Mammary epithelial cell (primary cell): ENCODE measurements at regions of chr12 and their contacts with region 1.

Region 1: DNA sequence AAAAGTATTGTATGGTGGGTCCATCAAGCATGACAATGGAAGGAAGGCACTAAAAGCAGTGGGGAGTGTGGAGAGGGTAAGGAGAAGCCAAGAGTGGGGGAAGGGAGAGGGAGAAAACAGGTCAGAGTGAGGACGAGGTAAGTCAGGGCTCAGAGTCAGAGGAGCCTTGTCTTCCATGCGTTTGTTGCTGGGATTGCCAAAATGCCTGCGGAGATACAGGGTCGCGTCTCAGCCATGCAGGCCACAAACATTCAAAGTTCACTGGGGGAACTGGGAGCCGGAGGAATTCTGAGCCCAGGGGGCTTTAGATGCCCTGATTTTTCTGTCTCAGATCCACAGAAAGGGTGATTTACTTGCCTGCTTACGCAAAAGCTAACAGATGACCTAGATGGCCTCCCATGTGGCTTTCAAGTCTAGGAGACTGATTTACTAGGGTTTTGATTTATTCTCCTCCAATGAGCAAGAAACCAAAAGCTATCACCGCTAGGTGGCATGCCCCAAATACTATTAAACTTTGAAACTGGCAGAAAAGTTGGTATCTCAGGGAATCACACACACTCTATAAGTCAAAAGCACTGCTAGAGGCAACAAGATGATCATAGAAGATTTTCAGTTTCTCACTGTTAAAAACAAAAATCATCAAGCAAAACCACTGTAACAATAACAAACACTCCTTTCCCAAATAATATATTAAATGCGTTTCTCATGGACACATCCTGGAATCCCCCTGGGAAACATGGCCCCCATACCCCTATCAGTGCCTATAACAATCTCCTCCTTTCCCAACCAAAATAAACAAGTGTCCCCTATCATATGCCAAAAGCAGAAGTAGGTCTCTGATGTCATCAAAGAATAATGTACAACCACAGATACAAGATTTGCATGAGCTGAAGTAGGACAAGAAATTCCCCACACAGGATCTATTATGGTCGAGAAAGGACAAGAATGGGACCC is 26.6 kb upstream of the MDM1 start:
- DNase-seq: peak; percentile 62
- H3K4me3 ChIP-seq: no peak overlapping the region
- H3K27ac ChIP-seq: no peak overlapping the region
- H3K4me1 ChIP-seq: peaks cover 5% of the 10 kb centered on the region
- H3K27me3 ChIP-seq: no peaks in the 10 kb centered on the region
- CTCF ChIP-seq: peak; percentile 69 to 81

Region 2: DNA sequence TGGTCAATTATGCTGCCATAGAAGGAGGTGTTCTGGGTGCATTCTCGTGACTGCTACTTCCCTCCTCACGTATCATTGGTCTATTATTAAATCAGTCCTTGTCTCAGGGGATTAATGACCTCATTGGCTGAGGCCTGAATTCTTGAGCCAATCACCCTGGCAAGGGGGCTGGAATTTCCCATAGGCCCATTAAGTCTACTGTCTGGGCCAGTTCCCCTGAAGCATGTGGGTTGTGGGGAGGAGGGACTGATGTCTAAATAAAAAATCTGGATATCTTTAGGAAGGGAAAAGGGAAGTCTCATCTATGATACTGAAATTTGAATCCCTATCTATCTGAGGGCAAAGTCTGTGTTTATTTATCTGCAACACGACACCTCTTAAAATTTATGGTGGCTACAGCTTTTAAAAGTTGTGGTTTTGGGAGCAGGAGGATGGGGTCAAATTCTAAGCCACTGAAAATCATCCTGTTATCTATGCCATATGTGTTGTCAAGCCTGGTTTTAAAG is 638.4 kb before region 1 on chr12:
- CTCF ChIA-PET with region 1: no interaction called
- dilution Hi-C with region 1: no loop called
- in situ Hi-C with region 1: no loop called
- intact Hi-C with region 1: no loop called
- DNase-seq: no peak
- H3K4me3 ChIP-seq: no peak overlapping the region
- H3K27ac ChIP-seq: no peak overlapping the region
- H3K4me1 ChIP-seq: no peaks in the 10 kb centered on the region
- H3K27me3 ChIP-seq: no peaks in the 10 kb centered on the region
- CTCF ChIP-seq: no peak

Region 3: DNA sequence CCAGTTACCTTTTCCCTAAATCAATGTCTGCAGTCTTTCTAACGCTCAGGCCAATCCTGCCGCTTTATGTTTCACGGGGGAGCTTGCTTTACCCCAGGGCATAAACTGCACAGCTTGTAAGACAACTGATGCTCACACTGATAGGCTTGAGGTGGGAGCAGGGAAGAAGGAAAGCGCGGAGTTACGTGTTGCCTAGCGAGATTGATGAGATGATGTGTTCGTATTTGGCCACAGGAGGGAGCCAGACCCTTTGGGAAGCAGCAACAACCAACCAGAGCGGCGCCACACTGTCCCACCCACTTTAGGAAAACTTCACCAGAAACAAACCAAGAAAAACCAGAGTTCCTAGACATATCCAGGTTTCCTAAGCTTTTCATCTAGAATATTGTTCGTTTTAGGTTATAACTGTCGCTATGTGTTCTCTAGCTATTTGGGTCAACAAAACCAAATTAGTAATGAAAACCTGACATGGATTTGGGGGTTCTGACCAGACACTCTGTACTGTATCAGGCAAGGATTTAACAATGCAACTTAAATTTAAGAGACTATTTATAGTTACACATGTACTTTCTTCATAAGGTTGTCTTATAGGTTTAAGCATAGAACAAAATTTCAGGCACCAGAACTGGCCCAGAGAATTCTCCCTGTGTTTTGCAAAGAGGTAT is 135.6 kb before region 1 on chr12:
- CTCF ChIA-PET with region 1: no interaction called
- dilution Hi-C with region 1: no loop called
- in situ Hi-C with region 1: no loop called
- intact Hi-C with region 1: loop called (anchors 1 kb)
- DNase-seq: peak; percentile 71
- H3K4me3 ChIP-seq: no peak overlapping the region
- H3K27ac ChIP-seq: no peak overlapping the region
- H3K4me1 ChIP-seq: peaks cover 6% of the 10 kb centered on the region
- H3K27me3 ChIP-seq: peaks cover under 1% of the 10 kb centered on the region
- CTCF ChIP-seq: peak; percentile 82 to 90

Region 4: GRCh38 chr12:68557011-68557730 is 198.4 kb after region 1 on chr12:
- CTCF ChIA-PET with region 1: no interaction called
- dilution Hi-C with region 1: no loop called
- in situ Hi-C with region 1: no loop called
- intact Hi-C with region 1: no loop called
- DNase-seq: peak; percentile 52
- H3K4me3 ChIP-seq: no peak overlapping the region
- H3K27ac ChIP-seq: no peak overlapping the region
- H3K4me1 ChIP-seq: peaks cover 25% of the 10 kb centered on the region
- H3K27me3 ChIP-seq: no peaks in the 10 kb centered on the region
- CTCF ChIP-seq: no peak

Region 5: DNA sequence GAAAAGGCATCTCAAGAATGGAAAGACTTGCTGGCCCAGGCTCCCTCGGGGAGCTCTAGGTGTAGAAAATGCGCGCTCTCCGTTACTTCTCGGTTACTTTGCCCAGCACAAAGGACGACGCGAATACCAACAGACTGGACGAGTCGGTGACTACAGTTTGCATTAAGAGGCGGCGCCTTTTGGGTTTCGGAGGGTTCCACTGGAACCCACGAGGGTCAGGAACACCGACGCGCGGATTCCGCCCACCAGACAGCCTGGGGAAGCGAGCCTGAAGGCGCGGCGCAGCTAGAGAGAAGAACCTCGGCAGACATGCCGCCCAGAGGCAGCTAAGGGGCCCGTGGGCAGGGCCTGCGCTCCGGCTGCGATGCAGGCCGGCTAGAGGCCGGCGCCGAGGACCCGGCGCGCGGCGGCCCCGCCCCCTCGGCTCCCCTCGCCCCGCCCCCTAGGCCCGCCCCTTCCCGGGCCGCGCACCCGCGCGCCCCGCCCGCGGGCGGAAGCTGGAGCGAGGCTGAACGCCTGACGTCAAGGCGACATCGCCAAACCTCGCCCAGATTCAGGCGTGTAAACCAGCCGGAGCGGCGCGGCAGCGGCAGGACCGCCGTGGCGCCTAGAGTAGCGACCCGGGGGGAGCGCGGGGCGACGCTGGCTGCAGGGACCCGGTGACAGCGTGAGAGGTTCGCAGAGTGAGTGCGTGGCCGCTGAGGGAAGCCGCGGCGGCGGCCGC is 251.7 kb after region 1 on chr12 and contains the start of gene RAP1B:
- CTCF ChIA-PET with region 1: no interaction called
- dilution Hi-C with region 1: no loop called
- in situ Hi-C with region 1: loop called in 1 of 2 experiments (anchors 25 kb)
- intact Hi-C with region 1: loop called (anchors 1 kb)
- DNase-seq: peak; percentile 85
- H3K4me3 ChIP-seq: peak within 1 kb of the TSS; percentile 67 to 100 (median 99)
- H3K27ac ChIP-seq: peak within 1 kb of the TSS; percentile 96
- H3K4me1 ChIP-seq: peaks cover 33% of the 10 kb centered on the region
- H3K27me3 ChIP-seq: no peaks in the 10 kb centered on the region
- CTCF ChIP-seq: no peak
- total RNA-seq, gene RAP1B: 140 to 188 TPM

Region 6: GRCh38 chr12:68665016-68665569 is 306.3 kb after region 1 on chr12:
- CTCF ChIA-PET with region 1: no interaction called
- dilution Hi-C with region 1: no loop called
- in situ Hi-C with region 1: no loop called
- intact Hi-C with region 1: loop called (anchors 2 kb)
- DNase-seq: no peak
- H3K4me3 ChIP-seq: no peak overlapping the region
- H3K27ac ChIP-seq: no peak overlapping the region
- H3K4me1 ChIP-seq: no peaks in the 10 kb centered on the region
- H3K27me3 ChIP-seq: no peaks in the 10 kb centered on the region
- CTCF ChIP-seq: no peak

Region 7: GRCh38 chr12:68686595-68687521 is 328.0 kb after region 1 on chr12 and contains the start of gene NUP107:
- CTCF ChIA-PET with region 1: no interaction called
- dilution Hi-C with region 1: no loop called
- in situ Hi-C with region 1: no loop called
- intact Hi-C with region 1: loop called (anchors 2 kb)
- DNase-seq: peak; percentile 98
- H3K4me3 ChIP-seq: peak within 1 kb of the TSS; percentile 73 to 90 (median 89)
- H3K27ac ChIP-seq: peak within 1 kb of the TSS; percentile 91
- H3K4me1 ChIP-seq: peaks cover 17% of the 10 kb centered on the region
- H3K27me3 ChIP-seq: no peaks in the 10 kb centered on the region
- CTCF ChIP-seq: peak in 1 of 2 donors; percentile 39
- total RNA-seq, gene NUP107: 40.8 to 52.3 TPM

Region 8: DNA sequence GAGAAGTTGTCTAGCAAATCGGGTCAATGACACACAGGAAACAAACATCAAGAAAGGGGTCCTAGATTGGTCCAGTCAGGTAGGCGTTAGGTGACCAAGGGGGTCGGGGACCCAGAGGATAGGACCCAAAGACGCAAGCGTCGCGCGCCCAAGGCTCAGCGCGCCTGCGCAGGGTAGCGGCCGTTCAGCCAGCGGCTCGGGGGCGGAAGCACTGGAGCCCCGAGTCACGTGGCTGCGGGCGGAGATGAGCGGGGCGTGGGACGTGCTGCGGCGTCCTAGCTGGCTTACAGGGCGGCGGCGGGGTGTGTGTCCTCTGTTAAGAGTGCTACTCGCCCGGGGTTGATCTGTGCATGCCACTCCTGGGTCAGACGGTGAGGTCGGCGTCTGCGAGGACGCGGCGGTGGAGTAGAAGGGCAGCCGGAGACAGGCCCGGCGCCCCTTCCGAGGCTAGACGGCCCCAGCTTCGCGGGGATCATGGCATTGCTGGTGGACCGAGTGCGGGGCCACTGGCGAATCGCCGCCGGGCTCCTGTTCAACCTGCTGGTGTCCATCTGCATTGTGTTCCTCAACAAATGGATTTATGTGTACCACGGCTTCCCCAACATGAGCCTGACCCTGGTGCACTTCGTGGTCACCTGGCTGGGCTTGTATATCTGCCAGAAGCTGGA is 387.2 kb after region 1 on chr12 and contains the start of gene SLC35E3:
- CTCF ChIA-PET with region 1: no interaction called
- dilution Hi-C with region 1: no loop called
- in situ Hi-C with region 1: no loop called
- intact Hi-C with region 1: loop called (anchors 2 kb)
- DNase-seq: peak; percentile 89
- H3K4me3 ChIP-seq: peak within 1 kb of the TSS; percentile 63 to 90 (median 85)
- H3K27ac ChIP-seq: peak within 1 kb of the TSS; percentile 62
- H3K4me1 ChIP-seq: peaks cover 14% of the 10 kb centered on the region
- H3K27me3 ChIP-seq: no peaks in the 10 kb centered on the region
- CTCF ChIP-seq: no peak
- total RNA-seq, gene SLC35E3: 5.5 to 12.4 TPM

Region 9: GRCh38 chr12:68786929-68787328 is 428.1 kb after region 1 on chr12:
- CTCF ChIA-PET with region 1: no interaction called
- dilution Hi-C with region 1: no loop called
- in situ Hi-C with region 1: no loop called
- intact Hi-C with region 1: loop called (anchors 5 kb)
- DNase-seq: no peak
- H3K4me3 ChIP-seq: no peak overlapping the region
- H3K27ac ChIP-seq: peak overlapping the region; percentile 80
- H3K4me1 ChIP-seq: peaks cover 47% of the 10 kb centered on the region
- H3K27me3 ChIP-seq: no peaks in the 10 kb centered on the region
- CTCF ChIP-seq: peak in 1 of 2 donors; percentile 16